ENCODE measurements at regions of chr10 and their contacts with region 1.

Region 1: GRCh38 chr10:104925232-104925851 is 284.3 kb downstream of the SORCS3 start:
- DNase-seq: no peak
- H3K4me3 ChIP-seq: no peak overlapping the region
- H3K27ac ChIP-seq: no peak overlapping the region
- H3K4me1 ChIP-seq: no peaks in the 10 kb centered on the region
- H3K27me3 ChIP-seq: no peaks in the 10 kb centered on the region
- CTCF ChIP-seq: peak in 1 of 2 experiments; percentile 34

Region 2: DNA sequence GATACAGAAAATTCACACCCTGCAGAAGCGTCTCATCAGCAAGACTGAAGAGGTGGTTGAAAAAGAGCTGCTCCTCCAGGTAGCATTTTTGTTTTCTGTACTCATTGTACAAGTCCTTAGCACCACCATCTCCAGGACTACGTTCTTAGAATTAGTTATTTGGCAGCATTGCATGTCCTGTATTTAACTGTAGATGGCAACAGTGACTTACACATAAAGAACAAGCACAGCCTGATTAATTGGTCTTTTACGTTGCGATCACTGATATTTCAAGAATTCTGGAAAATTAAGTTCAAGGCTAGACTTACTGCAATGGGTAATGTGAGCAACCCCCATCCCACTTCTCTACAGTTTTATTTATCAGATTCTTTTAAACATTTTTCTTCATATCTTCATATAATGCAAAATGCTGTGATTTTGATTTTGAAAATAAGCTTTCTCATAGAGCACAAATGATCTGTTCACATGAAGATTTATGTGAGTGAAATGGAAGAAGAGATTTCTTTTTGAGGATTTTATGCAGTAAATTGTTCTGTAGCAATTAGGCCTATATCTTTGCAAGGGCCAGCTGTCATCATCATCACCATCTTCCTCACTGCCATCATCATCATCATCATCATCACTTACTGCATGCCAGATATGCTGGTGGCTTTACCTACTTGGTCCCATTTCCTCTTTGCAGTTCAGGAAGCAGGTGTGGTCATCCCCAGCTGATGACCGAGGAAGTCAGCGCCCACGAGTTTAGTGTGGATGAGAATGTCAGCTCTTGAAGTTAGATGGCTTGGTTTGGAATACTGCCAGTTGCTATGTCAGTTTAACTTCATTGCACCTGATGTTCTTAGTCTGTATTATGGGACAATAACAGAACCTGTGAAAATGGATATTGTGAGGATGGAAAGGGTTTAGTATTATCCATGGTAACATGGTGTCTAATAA is 518.4 kb before region 1 on chr10:
- intact Hi-C with region 1: loop called (anchors 10 kb)
- DNase-seq: no peak
- H3K4me3 ChIP-seq: no peak overlapping the region
- H3K27ac ChIP-seq: no peak overlapping the region
- H3K4me1 ChIP-seq: no peaks in the 10 kb centered on the region
- H3K27me3 ChIP-seq: no peaks in the 10 kb centered on the region
- CTCF ChIP-seq: peak; percentile 71 to 78

Region 3: DNA sequence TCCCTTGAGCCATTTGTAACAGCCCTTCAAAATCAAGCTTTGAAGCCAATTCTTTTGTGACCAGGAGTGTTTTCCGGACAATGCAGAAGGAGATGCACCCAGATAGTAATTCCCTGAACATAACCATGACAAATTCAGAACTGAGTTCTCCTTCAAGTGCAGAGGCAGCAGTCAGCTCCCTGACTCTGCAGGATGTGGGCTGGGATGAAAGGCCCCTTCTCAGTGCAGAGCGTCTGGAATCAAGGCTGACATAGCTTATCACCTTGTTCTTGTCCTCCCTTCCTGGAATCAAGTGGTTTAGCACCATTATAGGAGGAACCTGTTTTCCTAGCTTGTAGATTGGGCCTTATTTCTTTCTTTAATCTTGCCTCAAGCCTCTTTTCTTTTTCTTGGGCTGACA is 140.9 kb before region 1 on chr10:
- intact Hi-C with region 1: no loop called
- DNase-seq: no peak
- H3K4me3 ChIP-seq: no peak overlapping the region
- H3K27ac ChIP-seq: no peak overlapping the region
- H3K4me1 ChIP-seq: no peaks in the 10 kb centered on the region
- H3K27me3 ChIP-seq: no peaks in the 10 kb centered on the region
- CTCF ChIP-seq: no peak

Measured in tibial artery (tissue), 4 donors.